Caco-2 (cell line): ENCODE measurements at regions of chr4 and their contacts with region 1.

Region 1: DNA sequence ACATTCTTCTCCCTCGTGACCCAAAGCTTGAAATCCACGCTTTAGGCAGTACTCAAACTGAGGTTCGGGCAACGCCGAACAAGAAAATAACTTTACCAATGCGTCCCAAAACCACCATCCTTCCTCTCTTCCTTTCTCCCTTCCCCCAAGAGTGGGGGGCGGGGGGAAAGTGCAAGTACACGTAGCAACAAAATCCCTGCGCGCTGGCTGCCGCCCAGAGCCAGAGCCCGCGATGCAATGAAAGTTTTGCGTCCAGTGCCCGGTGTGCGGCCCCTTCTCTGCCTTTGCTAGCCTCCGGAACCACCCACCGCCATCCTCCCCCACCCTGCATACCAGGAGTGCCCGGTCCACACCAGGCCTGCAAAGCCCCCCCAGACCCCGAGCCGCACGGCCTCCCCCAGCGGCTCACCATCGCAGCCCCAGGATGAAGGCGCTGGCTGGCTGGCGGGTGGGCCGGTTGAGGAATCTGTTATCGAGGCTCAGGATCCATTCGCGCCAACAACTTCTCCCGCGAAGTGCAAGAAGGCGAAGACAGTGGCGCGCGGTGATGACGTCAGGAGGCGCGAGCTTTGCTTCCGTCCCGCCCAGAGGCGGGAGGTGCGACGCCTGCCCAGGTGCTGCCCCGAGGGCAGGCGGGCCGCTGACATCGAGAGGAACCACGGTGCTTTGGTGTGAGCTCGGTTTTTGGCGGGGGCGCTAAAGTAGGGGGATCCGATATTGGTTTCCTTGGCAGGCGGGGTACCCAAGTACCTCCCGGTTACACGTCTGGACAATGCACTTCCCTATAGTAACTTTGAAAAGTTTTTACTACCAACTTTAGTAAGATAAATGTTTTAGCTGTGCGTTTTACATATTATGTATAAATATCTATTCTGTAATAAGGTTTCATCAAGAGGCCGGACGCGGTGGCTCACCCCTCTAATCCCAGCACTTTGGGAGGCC is at the start of gene RFC1:
- DNase-seq: peak; percentile 95
- H3K4me3 ChIP-seq: peak within 1 kb of the TSS; percentile 88
- H3K4me3 Mint-ChIP-seq: peak within 1 kb of the TSS; percentile 96
- H3K27ac Mint-ChIP-seq: peak within 1 kb of the TSS; percentile 98
- H3K4me1 ChIP-seq: peaks cover 4% of the 10 kb centered on the region; the same call in 1 of the 2 replicates
- H3K4me1 Mint-ChIP-seq: peaks cover 13% of the 10 kb centered on the region
- H3K27me3 ChIP-seq: no peaks in the 10 kb centered on the region
- H3K27me3 Mint-ChIP-seq: no peaks in the 10 kb centered on the region
- CTCF ChIP-seq: no peak
- total RNA-seq, gene RFC1: 58.8 and 63.4 TPM in 2 replicates

Region 2: DNA sequence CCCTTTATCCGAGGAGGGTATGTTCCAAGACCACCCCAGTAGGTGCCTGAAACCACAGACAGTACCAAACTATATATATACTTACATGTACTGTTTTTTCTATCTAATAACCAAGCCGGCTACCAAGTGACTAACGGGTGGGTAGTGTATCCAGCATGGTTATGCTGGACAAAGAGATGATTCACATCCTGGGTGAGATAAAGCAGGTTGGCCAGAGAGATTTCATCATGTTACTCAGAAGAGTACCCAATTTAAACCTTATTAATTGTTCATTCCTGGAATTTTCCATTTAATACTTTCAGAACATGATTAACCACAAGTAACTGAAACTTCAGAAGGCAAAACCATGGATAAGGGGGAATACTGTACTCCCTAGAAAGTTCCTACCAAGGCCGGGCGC is 46.4 kb before region 1 on chr4:
- CTCF ChIA-PET with region 1: no interaction called
- POLR2A ChIA-PET with region 1: interaction called, 7 read pairs
- intact Hi-C with region 1: loop called (anchors 5 kb)
- DNase-seq: no peak
- H3K4me3 ChIP-seq: no peak overlapping the region
- H3K4me3 Mint-ChIP-seq: no peak overlapping the region
- H3K27ac Mint-ChIP-seq: no peak overlapping the region
- H3K4me1 ChIP-seq: peaks cover 37% of the 10 kb centered on the region
- H3K4me1 Mint-ChIP-seq: peaks cover 12% of the 10 kb centered on the region
- H3K27me3 ChIP-seq: no peaks in the 10 kb centered on the region
- H3K27me3 Mint-ChIP-seq: no peaks in the 10 kb centered on the region
- CTCF ChIP-seq: no peak

Region 3: DNA sequence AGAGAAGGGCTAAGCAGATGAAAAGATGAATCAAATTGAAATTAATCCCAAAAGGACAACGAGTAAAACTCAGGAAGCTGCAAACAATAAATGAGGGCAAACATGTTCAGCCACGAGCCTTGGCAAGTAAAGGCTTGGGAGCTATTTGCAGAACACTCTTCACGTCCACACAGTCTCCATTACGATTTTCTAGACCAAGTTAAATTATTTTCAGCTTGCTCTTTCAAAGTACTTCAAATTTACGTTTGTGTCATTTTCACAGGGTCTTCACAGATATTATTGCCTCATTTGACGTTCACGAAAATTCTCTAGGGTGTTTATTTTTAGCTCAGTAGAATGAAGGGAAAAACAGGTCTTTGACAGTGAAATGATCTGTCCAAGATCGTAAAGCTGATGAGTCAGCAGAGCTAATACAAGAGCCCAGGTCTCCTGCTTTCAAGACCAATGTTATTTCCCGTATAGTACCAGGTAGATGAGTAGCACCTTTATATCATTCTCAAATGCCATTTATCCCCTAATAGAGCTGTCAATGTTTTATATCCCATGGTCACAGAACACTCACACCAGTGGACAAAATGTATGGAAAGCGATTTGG is 61.5 kb after region 1 on chr4:
- CTCF ChIA-PET with region 1: interaction called, 4 read pairs
- POLR2A ChIA-PET with region 1: interaction called, 14 read pairs
- intact Hi-C with region 1: loop called (anchors 2 kb)
- DNase-seq: no peak
- H3K4me3 ChIP-seq: no peak overlapping the region
- H3K4me3 Mint-ChIP-seq: no peak overlapping the region
- H3K27ac Mint-ChIP-seq: peak overlapping the region; percentile 42
- H3K4me1 ChIP-seq: peaks cover 28% of the 10 kb centered on the region
- H3K4me1 Mint-ChIP-seq: peaks cover 20% of the 10 kb centered on the region
- H3K27me3 ChIP-seq: no peaks in the 10 kb centered on the region
- H3K27me3 Mint-ChIP-seq: no peaks in the 10 kb centered on the region
- CTCF ChIP-seq: no peak

Region 4: DNA sequence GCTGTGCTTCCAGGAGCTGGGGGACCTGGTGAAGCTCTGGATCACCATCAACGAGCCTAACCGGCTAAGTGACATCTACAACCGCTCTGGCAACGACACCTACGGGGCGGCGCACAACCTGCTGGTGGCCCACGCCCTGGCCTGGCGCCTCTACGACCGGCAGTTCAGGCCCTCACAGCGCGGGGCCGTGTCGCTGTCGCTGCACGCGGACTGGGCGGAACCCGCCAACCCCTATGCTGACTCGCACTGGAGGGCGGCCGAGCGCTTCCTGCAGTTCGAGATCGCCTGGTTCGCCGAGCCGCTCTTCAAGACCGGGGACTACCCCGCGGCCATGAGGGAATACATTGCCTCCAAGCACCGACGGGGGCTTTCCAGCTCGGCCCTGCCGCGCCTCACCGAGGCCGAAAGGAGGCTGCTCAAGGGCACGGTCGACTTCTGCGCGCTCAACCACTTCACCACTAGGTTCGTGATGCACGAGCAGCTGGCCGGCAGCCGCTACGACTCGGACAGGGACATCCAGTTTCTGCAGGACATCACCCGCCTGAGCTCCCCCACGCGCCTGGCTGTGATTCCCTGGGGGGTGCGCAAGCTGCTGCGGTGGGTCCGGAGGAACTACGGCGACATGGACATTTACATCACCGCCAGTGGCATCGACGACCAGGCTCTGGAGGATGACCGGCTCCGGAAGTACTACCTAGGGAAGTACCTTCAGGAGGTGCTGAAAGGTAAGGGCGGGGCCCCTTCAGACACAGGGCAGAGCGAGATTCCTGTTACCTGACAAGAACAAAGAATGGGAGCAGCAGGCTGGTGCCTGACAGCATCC is 80.9 kb after region 1 on chr4:
- CTCF ChIA-PET with region 1: no interaction called
- POLR2A ChIA-PET with region 1: interaction called, 5 read pairs
- intact Hi-C with region 1: loop called (anchors 5 kb)
- DNase-seq: no peak
- H3K4me3 ChIP-seq: no peak overlapping the region
- H3K4me3 Mint-ChIP-seq: no peak overlapping the region
- H3K27ac Mint-ChIP-seq: no peak overlapping the region
- H3K4me1 ChIP-seq: peaks cover 9% of the 10 kb centered on the region
- H3K4me1 Mint-ChIP-seq: peaks cover 9% of the 10 kb centered on the region
- H3K27me3 ChIP-seq: no peaks in the 10 kb centered on the region
- H3K27me3 Mint-ChIP-seq: no peaks in the 10 kb centered on the region
- CTCF ChIP-seq: no peak